ENCODE measurements at regions of chr11 and their contacts with region 1.

Region 1: DNA sequence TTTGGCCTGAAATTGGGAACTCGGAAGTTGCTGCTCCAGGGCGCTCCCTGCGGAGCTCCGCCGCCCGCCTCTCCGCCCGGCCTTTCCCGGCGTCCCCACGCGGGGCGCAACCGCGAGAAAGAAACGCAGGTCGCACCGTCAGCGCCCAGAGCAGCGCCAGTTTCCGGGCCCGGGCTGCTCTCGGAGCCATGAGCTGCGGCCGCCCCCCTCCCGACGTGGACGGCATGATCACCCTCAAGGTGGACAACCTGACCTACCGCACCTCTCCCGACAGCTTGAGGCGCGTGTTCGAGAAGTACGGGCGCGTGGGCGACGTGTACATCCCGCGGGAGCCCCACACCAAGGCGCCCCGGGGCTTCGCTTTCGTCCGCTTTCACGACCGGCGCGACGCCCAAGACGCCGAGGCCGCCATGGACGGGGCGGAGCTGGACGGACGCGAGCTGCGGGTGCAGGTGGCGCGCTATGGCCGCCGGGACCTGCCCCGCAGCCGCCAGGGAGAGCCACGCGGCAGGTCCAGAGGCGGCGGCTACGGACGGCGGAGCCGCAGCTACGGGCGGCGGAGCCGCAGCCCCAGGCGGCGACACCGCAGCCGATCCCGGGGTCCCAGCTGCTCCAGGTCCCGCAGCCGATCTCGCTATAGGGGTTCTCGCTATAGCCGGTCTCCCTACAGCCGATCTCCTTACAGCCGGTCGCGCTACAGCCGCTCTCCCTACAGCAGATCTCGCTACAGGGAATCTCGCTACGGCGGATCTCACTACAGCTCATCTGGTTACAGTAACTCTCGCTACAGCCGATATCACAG is 521 bp downstream of the SRSF8 start:
- DNase-seq: peak; percentile 79
- H3K4me3 ChIP-seq: peak overlapping the region; percentile 78 to 98 (median 79)
- H3K27ac ChIP-seq: peak overlapping the region; percentile 62
- H3K4me1 ChIP-seq: peaks cover 19% of the 10 kb centered on the region
- H3K27me3 ChIP-seq: peaks cover 1 to 6% of the 10 kb centered on the region in 2 experiments
- CTCF ChIP-seq: peak; percentile 48 to 77
- POLR2A ChIP-seq: peak; percentile 66

Region 2: DNA sequence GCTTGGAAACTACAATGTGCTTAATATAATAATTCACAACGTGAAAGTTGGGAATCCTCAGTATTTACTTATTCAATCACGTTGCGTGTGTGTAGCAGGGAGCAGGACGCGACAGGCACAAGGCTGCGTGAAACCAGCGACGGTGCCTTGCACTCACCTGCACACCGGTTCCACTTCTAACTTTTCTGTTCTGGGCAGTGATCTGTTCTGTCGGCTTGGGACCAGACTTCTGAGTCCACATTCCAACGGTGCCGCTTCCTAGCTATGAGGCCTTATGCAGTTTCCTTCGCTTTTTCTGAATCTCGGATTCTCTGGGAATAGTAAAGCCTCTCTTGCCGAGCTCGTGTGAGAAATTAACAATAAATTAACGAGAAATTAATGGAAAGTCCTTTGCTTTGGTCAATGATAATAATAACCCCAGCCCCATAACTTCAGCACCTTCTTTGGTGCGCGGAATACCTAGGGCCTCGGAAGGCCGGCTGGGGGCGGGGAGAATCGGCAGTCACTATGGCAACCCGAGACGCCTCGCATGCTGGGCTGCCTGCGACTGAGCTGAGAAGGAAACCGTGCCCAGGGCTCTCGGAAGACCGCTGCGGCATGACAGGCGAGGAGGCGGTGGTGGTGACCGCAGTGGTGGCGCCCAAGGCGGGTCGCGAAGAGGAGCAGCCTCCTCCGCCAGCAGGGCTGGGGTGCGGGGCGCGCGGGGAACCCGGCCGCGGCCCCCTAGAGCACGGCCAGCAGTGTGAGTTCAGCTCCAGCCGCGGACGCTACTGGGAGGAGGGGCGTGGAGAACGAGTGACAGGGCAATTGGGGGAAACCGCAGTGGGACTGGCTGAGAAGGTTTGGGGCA is 555.1 kb before region 1 on chr11 and contains the start of gene C11orf97:
- CTCF ChIA-PET with region 1: no interaction called
- POLR2A ChIA-PET with region 1: no interaction called
- dilution Hi-C with region 1: no loop called
- intact Hi-C with region 1: no loop called
- DNase-seq: peak; percentile 49
- H3K4me3 ChIP-seq: peak within 1 kb of the TSS; percentile 9 to 40 (median 31)
- H3K27ac ChIP-seq: no peak within 1 kb of the TSS
- H3K4me1 ChIP-seq: peaks cover 4% of the 10 kb centered on the region
- H3K27me3 ChIP-seq: peaks cover 17 to 29% of the 10 kb centered on the region in 2 experiments
- CTCF ChIP-seq: no peak
- POLR2A ChIP-seq: no peak
- total RNA-seq, gene C11orf97: not detected in 2 replicates

Region 3: DNA sequence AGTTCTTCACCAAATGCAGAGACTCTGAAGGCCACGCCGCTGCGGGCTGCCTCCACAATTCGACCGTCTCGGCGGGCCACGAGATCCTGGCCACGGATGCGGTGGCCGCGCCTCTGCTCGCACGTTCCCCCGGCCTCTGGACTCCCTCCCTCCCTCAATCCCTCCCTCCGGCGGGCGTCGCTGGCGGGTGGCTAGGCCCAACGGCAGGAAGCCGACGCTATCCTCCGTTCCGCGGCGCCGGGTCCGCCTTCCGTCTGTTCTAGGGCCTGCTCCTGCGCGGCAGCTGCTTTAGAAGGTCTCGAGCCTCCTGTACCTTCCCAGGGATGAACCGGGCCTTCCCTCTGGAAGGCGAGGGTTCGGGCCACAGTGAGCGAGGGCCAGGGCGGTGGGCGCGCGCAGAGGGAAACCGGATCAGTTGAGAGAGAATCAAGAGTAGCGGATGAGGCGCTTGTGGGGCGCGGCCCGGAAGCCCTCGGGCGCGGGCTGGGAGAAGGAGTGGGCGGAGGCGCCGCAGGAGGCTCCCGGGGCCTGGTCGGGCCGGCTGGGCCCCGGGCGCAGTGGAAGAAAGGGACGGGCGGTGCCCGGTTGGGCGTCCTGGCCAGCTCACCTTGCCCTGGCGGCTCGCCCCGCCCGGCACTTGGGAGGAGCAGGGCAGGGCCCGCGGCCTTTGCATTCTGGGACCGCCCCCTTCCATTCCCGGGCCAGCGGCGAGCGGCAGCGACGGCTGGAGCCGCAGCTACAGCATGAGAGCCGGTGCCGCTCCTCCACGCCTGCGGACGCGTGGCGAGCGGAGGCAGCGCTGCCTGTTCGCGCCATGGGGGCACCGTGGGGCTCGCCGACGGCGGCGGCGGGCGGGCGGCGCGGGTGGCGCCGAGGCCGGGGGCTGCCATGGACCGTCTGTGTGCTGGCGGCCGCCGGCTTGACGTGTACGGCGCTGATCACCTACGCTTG is 523.3 kb before region 1 on chr11 and contains the start of gene FUT4:
- CTCF ChIA-PET with region 1: no interaction called
- POLR2A ChIA-PET with region 1: no interaction called
- dilution Hi-C with region 1: no loop called
- intact Hi-C with region 1: loop called (anchors 1 kb)
- DNase-seq: peak; percentile 80
- H3K4me3 ChIP-seq: peak within 1 kb of the TSS; percentile 11 to 57 (median 41)
- H3K27ac ChIP-seq: peak within 1 kb of the TSS; percentile 55
- H3K4me1 ChIP-seq: peaks cover 12% of the 10 kb centered on the region
- H3K27me3 ChIP-seq: peaks cover 4 to 9% of the 10 kb centered on the region in 2 experiments
- CTCF ChIP-seq: no peak
- POLR2A ChIP-seq: peak; percentile 76
- total RNA-seq, gene FUT4: 4.4 and 5.3 TPM in 2 replicates

Region 4: DNA sequence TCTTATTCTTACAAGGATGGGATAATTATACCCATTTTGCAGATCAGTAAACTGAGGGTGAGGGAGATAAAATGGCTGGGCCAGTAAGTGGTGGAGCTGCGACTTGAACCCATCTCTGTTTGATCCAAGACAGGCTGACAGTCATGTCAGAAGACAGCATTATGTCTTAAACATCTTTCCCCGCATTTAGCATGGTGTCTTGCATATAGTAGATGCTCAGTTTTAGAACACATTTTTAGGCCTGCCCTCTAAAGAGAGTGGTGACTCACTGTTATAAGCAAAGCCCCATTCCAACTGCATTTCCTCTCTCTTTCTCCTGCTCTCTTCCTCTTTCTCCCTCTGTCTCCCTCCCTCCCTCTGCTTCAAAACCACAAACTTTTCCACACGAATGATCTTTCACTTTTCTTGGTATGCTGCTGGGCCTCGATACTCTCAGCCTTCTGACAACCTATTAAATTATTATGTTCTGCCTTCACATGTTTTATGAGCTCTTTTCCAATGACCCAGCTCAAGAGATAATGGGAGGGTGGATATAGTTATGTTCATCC is 119.1 kb before region 1 on chr11:
- CTCF ChIA-PET with region 1: no interaction called
- POLR2A ChIA-PET with region 1: no interaction called
- dilution Hi-C with region 1: no loop called
- intact Hi-C with region 1: no loop called
- DNase-seq: no peak
- H3K4me3 ChIP-seq: no peak overlapping the region
- H3K27ac ChIP-seq: no peak overlapping the region
- H3K4me1 ChIP-seq: no peaks in the 10 kb centered on the region
- H3K27me3 ChIP-seq: no peaks in the 10 kb centered on the region
- CTCF ChIP-seq: no peak
- POLR2A ChIP-seq: no peak

Region 5: GRCh38 chr11:94973099-94973968 is 93.9 kb before region 1 on chr11 and contains the starts of genes CWC15 and KDM4D:
- CTCF ChIA-PET with region 1: interaction called, 7 read pairs
- POLR2A ChIA-PET with region 1: interaction called, 7 read pairs
- dilution Hi-C with region 1: no loop called
- intact Hi-C with region 1: loop called (anchors 1 kb)
- DNase-seq: peak; percentile 95
- H3K4me3 ChIP-seq: peak within 1 kb of the TSS; percentile 77 to 94 (median 92)
- H3K27ac ChIP-seq: peak within 1 kb of the TSS; percentile 76
- H3K4me1 ChIP-seq: peaks cover 9% of the 10 kb centered on the region
- H3K27me3 ChIP-seq: no peaks in the 10 kb centered on the region
- CTCF ChIP-seq: no peak
- POLR2A ChIP-seq: peak; percentile 91
- total RNA-seq, gene CWC15: 72.0 and 75.6 TPM in 2 replicates
- total RNA-seq, gene KDM4D: 1.0 and 1.3 TPM in 2 replicates

Region 6: DNA sequence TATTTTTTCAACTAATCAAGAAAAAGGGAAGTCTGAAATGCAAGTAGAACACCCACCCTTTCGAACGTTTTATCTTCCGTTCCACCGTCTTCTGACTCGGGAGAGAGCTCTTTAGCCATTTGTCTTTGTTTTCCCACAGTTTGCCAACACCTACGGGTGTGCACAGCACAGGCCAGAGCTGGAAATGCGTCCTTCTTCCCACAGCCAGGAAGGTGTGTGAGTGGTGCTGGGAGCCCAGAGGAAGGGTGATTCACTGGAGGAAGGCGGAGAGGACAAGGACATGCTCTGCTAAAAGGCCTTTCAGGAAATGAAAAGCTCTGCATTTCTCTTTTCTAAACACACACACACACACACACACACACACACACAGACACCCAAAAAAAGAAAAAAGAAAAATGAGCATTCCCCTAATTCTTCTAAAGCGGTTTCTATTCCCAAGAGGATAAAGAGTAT is 40.9 kb after region 1 on chr11:
- CTCF ChIA-PET with region 1: interaction called, 23 read pairs
- POLR2A ChIA-PET with region 1: interaction called, 3 read pairs
- dilution Hi-C with region 1: no loop called
- intact Hi-C with region 1: loop called (anchors 1 kb)
- DNase-seq: peak; percentile 90
- H3K4me3 ChIP-seq: peak overlapping the region in 1 of 3 experiments; percentile 5
- H3K27ac ChIP-seq: peak overlapping the region; percentile 76
- H3K4me1 ChIP-seq: peaks cover 28% of the 10 kb centered on the region
- H3K27me3 ChIP-seq: no peaks in the 10 kb centered on the region
- CTCF ChIP-seq: no peak
- POLR2A ChIP-seq: peak; percentile 31

Region 7: GRCh38 chr11:95150946-95151684 is 83.9 kb after region 1 on chr11:
- CTCF ChIA-PET with region 1: interaction called, 96 read pairs
- POLR2A ChIA-PET with region 1: interaction called, 9 read pairs
- dilution Hi-C with region 1: no loop called
- intact Hi-C with region 1: loop called (anchors 1 kb)
- DNase-seq: peak; percentile 92
- H3K4me3 ChIP-seq: peak overlapping the region; percentile 9 to 39 (median 34)
- H3K27ac ChIP-seq: peak overlapping the region; percentile 62
- H3K4me1 ChIP-seq: peaks cover 36% of the 10 kb centered on the region
- H3K27me3 ChIP-seq: no peaks in the 10 kb centered on the region
- CTCF ChIP-seq: peak; percentile 73 to 84
- POLR2A ChIP-seq: no peak

Region 8: GRCh38 chr11:95764267-95764898 is 697.1 kb after region 1 on chr11:
- CTCF ChIA-PET with region 1: interaction called, 4 read pairs
- POLR2A ChIA-PET with region 1: no interaction called
- dilution Hi-C with region 1: no loop called
- intact Hi-C with region 1: loop called (anchors 1 kb)
- DNase-seq: peak; percentile 70
- H3K4me3 ChIP-seq: no peak overlapping the region
- H3K27ac ChIP-seq: no peak overlapping the region
- H3K4me1 ChIP-seq: no peaks in the 10 kb centered on the region
- H3K27me3 ChIP-seq: peaks cover 5 to 6% of the 10 kb centered on the region in 2 experiments
- CTCF ChIP-seq: peak; percentile 33 to 37
- POLR2A ChIP-seq: no peak